ENCODE measurements at regions of chr14 and their contacts with region 1.

Region 1: GRCh38 chr14:105448706-105449111 is 25.9 kb upstream of the CRIP2 start:
- DNase-seq: peak; percentile 87

Region 2: GRCh38 chr14:105026803-105027563 is 421.7 kb before region 1 on chr14:
- intact Hi-C with region 1: no loop called
- DNase-seq: no peak

Region 3: GRCh38 chr14:105363847-105364708 is 84.6 kb before region 1 on chr14:
- intact Hi-C with region 1: no loop called
- DNase-seq: no peak

Region 4: GRCh38 chr14:105375635-105376057 is 73.1 kb before region 1 on chr14:
- intact Hi-C with region 1: loop called (anchors 5 kb)
- DNase-seq: no peak

Region 5: GRCh38 chr14:105398044-105398725 is 50.5 kb before region 1 on chr14 and contains the start of gene TEX22:
- intact Hi-C with region 1: loop called (anchors 2 kb)
- DNase-seq: peak; percentile 93
- total RNA-seq, gene TEX22: 0.46 TPM

Region 6: DNA sequence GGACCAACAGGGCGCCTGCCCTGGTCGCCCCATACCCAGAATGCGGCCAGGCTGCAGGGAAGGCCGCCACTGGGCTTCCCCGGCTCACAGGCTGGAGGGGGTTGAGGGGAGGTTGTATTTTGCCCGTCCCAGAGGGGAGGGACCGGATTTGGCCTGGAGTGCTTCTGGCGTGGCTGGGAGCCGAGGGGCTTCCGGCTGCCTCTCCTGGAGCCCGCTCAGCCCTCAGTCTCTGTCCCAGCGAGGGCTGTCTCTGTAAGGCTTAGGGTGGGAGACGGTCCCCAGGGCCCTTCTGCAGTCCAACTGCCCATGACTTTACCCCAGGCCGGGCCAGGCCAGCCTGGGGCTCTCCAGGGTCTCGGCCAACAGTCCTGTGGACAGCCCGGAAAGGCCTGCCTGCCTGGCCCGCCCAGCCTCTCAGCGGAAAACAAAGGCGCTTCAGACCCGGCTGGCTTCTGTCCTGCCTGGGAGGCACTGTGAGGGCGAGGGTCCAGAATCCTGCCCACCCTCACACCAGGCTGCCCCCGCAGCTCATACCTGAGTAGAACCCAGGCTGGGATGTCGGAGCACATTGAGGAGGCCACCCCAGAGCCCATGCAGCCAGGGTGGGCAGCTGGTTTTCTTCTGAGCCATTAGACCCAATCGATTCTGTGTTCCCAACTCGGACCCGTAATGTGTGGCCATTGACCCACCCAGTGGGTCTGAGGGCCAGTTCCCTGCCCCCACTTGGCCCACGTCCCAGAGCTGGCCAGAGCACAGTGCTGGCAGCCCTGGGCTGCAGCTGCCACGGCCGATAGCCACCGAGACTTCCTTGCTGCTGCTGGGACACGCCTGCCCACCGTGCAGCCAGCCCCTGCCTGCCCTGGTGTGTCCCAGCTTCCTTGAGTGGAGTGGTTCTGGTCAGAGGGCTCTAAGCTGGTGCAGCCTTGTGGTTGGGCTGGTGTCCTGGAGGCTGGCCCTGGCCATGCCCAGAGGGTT is 27.5 kb after region 1 on chr14:
- intact Hi-C with region 1: no loop called
- DNase-seq: no peak

Region 7: DNA sequence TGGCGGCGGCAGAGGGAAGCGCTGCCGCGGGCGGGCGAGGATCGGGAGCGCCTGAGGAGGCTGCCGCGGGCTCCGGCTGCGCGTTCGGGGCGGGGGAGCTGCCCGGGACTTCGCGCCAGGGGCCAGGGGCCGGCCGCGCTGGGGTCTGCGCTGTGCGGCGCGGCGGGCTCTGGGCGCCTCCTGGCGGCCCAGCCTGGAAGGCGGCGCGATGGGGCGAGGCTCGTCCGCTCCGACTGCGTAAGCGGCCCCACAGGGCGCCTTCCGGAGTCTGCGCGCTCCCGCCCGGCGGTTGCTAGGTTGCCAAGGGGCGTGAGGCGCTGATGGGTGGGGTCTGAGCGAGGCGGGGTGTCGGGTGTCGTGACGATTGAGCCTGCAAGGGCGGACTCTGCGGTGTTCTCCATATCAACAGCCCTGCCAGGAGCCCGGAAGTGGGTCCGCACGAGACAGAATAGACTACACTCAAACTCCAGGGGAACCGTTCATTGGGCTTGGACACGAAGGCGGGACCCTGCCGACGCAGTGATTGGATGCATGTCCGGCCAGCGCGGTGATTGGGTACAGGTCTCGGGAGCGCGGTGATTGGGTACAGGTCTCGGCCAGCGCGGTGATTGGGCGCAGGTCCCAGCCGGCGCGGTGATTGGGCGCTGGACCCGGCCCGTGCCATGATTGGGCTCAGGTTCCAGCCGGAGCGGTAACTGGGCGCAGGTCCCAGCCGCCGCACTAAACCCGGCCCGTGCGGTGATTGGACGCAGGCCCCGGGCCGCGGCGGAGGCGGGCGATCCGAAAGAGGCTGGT is 42.1 kb after region 1 on chr14 and contains the start of gene TEDC1:
- intact Hi-C with region 1: loop called (anchors 2 kb)
- DNase-seq: peak; percentile 99
- total RNA-seq, gene TEDC1: 3.8 TPM

Region 8: GRCh38 chr14:105527661-105528581 is 79.2 kb after region 1 on chr14:
- intact Hi-C with region 1: loop called (anchors 5 kb)
- DNase-seq: peak; percentile 90

Region 9: DNA sequence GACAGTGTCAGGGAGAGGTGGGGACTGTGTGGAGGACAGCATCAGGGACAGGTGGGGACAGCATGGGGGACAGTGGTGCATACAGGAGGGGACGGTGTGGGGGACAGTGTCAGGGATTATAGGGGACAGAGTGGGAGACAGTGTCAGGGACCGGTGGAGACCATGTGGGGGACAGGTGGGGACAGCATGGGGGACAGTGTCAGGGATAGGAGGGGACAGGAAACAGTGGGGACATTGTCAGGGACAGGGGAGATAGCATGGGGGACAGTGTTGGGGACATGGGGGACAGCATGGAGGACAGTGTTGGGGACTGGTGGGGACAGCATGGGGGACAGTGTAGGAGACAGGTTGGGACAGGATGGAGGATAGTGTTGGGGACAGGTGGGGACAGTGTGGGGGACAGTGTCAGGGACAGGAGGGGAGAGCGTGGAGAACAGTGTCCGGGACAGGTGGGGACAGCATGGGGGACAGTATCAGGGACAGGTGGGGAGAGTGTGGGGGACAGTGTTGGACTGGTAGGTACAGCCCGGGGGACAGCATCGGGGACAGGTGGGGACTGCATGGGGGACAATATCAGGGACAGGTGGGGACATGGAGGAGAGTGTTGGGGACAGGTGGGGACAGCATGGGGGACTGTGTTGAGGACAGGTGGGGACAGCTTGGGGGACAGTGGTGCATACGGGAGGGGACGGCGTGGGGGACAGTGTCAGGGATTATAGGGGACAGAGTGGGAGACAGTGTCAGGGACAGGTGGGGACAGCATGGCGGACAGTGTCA is 289.7 kb after region 1 on chr14:
- intact Hi-C with region 1: no loop called
- DNase-seq: no peak